Calu3 (cell line): ENCODE measurements at regions of chr2 and their contacts with region 1.

Region 1: DNA sequence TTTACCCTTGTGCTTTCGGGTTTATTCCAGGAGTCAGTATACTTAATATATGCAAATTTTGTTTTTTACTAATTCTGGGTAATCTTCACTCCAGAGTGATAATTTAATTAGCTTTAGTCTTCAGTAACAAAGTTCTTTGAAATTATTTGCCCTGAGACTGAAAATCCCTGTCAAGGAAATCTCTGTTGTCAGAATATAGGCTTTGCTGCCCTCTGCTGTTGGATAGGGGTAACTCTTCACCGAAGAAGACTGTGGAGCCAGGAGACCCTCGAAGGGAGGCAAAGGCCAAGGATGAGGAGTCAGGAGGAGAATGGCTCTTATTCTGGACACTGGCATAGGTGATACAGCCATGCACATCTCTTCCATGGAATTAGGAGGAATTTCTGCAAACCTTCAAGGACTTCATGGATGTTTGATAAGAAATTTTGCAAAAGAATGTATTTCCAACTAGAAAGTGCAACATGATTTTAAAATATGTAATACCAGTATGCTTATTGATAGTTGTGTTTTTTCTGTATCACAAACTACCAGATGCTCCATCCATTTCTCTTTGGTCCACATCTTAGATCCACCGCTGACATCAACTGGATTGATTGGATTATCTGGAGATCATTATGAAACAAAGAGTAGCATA is 182.3 kb downstream of the RDH14 start:
- DNase-seq: peak; percentile 48
- H3K4me3 Mint-ChIP-seq: no peak overlapping the region
- H3K27ac Mint-ChIP-seq: no peak overlapping the region
- H3K4me1 Mint-ChIP-seq: no peaks in the 10 kb centered on the region
- H3K27me3 Mint-ChIP-seq: no peaks in the 10 kb centered on the region
- CTCF ChIP-seq: peak; percentile 76

Region 2: GRCh38 chr2:17753803-17754663 is 624.1 kb before region 1 on chr2 and contains the starts of genes GEN1 and SMC6:
- CTCF ChIA-PET with region 1: no interaction called
- intact Hi-C with region 1: loop called (anchors 10 kb)
- DNase-seq: peak; percentile 89
- H3K4me3 Mint-ChIP-seq: peak within 1 kb of the TSS; percentile 86
- H3K27ac Mint-ChIP-seq: peak within 1 kb of the TSS; percentile 86
- H3K4me1 Mint-ChIP-seq: peaks cover 18% of the 10 kb centered on the region
- H3K27me3 Mint-ChIP-seq: no peaks in the 10 kb centered on the region
- CTCF ChIP-seq: no peak
- total RNA-seq, gene GEN1: 29.6 and 34.8 TPM in 2 replicates
- total RNA-seq, gene SMC6: 29.6 and 31.6 TPM in 2 replicates

Region 3: DNA sequence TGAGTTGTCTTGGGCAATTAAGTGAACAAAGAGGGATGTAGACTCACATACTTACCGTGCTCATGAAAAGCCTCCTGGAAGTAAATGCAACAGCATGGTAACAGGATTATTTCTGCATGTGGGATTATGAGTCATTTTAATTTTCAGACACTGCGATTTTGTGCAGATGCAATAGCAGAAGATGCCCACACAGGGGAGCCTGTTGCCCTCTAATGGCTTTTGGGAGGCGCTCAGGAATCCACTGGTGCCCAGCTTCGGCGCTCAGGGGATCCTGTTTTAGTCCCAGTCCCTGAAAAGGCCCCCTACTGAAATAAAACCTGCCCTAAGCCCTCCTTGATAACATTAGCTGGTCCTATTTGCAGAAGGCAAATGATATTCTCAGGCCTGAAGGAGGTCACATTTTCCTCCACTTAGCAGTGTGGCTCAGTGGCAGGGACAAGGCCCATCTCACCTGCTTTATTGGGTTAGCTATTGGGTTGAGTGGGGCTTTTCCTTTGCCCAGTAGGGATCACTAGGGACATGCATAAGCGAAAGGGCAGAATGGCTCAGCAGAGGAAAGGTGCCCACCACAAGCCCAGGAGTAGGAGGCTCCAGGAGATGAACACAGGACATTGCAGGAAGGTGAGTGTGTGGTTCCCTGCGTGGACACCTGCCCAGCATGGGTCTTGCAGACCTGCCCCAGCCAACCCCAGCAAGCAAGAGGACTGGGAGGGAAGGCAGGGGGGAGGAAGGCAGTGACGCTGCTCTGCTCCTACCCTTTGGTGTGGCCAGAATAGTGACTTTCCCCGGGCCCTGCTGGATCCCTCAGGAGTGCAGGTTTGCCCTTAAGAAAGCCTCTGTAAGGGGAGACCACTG is 526.2 kb before region 1 on chr2:
- CTCF ChIA-PET with region 1: no interaction called
- intact Hi-C with region 1: loop called (anchors 1 kb)
- DNase-seq: peak; percentile 67
- H3K4me3 Mint-ChIP-seq: no peak overlapping the region
- H3K27ac Mint-ChIP-seq: no peak overlapping the region
- H3K4me1 Mint-ChIP-seq: no peaks in the 10 kb centered on the region
- H3K27me3 Mint-ChIP-seq: peaks cover 43% of the 10 kb centered on the region
- CTCF ChIP-seq: peak; percentile 91

Region 4: GRCh38 chr2:18117592-18117991 is 260.5 kb before region 1 on chr2:
- CTCF ChIA-PET with region 1: no interaction called
- intact Hi-C with region 1: loop called (anchors 5 kb)
- DNase-seq: peak; percentile 50
- H3K4me3 Mint-ChIP-seq: no peak overlapping the region
- H3K27ac Mint-ChIP-seq: no peak overlapping the region
- H3K4me1 Mint-ChIP-seq: no peaks in the 10 kb centered on the region
- H3K27me3 Mint-ChIP-seq: peaks cover 12% of the 10 kb centered on the region
- CTCF ChIP-seq: peak; percentile 32

Region 5: GRCh38 chr2:18149645-18150246 is 228.4 kb before region 1 on chr2:
- CTCF ChIA-PET with region 1: no interaction called
- intact Hi-C with region 1: no loop called
- DNase-seq: no peak
- H3K4me3 Mint-ChIP-seq: no peak overlapping the region
- H3K27ac Mint-ChIP-seq: no peak overlapping the region
- H3K4me1 Mint-ChIP-seq: no peaks in the 10 kb centered on the region
- H3K27me3 Mint-ChIP-seq: peaks cover 24% of the 10 kb centered on the region
- CTCF ChIP-seq: peak; percentile 35

Region 6: DNA sequence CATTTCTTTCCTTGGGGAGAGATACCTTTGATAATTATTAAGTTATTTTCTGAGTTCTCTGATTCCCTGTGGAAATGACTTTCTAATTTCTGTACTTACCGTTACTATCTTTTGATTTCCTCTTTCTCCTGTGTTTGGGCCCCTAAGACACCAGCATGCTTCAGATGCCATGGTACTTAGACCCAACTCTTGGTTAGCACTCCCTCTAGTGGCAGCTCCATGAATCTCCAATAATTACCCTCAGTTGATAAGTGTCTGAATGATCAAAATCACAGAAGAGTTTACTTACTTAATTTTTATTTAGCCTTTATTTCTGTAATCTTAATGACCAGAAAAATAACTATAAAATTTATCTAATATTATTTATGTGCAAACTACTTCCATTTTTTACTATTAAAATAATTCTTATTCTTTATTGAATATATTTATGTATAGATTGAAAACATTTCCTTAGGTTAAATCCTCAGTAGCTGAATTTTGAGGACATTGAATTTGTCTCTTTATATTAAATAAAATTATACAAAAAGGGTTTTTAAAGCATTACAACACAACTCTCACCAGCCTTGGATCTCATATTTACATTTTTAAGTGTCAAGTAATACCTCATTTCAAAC is 199.3 kb before region 1 on chr2:
- CTCF ChIA-PET with region 1: no interaction called
- intact Hi-C with region 1: loop called (anchors 1 kb)
- DNase-seq: peak; percentile 60
- H3K4me3 Mint-ChIP-seq: no peak overlapping the region
- H3K27ac Mint-ChIP-seq: no peak overlapping the region
- H3K4me1 Mint-ChIP-seq: peaks cover 13% of the 10 kb centered on the region
- H3K27me3 Mint-ChIP-seq: no peaks in the 10 kb centered on the region
- CTCF ChIP-seq: peak; percentile 74

Region 7: DNA sequence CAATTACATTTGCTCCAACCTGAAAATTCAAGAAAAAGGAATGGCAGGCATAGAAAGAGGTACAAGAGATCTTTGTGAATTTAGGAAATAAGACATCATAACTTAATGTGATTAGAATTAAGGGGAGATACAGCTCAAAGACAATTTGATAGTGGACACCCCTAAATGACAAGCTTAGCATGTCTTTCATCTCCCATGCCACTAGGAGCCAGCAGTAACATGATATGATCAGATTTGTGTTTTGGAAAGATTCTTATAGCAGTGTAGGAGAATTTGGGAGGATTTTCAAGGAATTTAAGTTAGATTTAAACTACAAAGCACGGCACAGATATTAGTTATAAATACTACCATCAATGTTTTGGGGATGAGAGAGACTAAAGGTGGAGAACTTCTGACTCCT is 158.5 kb before region 1 on chr2:
- CTCF ChIA-PET with region 1: no interaction called
- intact Hi-C with region 1: loop called (anchors 1 kb)
- DNase-seq: no peak
- H3K4me3 Mint-ChIP-seq: no peak overlapping the region
- H3K27ac Mint-ChIP-seq: no peak overlapping the region
- H3K4me1 Mint-ChIP-seq: no peaks in the 10 kb centered on the region
- H3K27me3 Mint-ChIP-seq: no peaks in the 10 kb centered on the region
- CTCF ChIP-seq: no peak

Region 8: DNA sequence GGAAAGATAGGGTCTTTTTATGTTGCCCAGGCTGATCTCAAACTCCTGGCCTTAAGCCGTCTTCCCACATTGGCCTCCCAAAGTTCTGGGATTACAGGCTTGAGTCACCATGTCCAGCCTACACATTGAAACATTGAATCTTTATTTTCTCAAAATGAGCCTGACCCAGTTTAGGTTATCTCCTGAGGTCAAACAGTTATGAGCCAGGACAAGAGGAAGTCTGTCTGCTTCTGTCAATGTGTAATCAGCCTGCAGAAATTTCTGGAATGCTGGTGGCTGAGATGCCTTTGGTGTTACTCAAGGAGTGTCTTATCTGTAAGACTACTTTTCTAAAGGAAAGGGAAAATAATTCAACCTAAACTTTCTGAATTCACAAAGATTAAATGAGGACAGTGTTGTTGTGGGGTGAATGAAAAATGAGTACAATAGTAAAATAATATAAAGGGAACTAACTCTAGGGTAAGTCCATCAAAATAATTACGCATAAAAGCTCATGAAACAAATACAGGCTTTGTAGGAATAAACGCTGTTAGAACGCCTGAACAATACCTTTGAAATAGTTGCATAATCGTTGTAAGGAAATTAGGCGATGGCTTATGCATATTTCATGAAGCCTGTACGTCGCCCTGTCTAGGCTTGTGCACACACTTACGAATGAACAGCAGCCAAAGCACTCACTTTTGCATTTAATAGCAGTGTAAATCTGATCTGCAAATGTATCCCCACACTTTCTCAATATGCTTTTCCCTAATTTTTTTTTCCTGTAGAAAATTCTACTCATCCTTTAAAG is 78.5 kb before region 1 on chr2:
- CTCF ChIA-PET with region 1: no interaction called
- intact Hi-C with region 1: loop called (anchors 1 kb)
- DNase-seq: peak; percentile 74
- H3K4me3 Mint-ChIP-seq: peak overlapping the region; percentile 34
- H3K27ac Mint-ChIP-seq: peak overlapping the region; percentile 61
- H3K4me1 Mint-ChIP-seq: peaks cover 11% of the 10 kb centered on the region
- H3K27me3 Mint-ChIP-seq: no peaks in the 10 kb centered on the region
- CTCF ChIP-seq: no peak

Region 9: DNA sequence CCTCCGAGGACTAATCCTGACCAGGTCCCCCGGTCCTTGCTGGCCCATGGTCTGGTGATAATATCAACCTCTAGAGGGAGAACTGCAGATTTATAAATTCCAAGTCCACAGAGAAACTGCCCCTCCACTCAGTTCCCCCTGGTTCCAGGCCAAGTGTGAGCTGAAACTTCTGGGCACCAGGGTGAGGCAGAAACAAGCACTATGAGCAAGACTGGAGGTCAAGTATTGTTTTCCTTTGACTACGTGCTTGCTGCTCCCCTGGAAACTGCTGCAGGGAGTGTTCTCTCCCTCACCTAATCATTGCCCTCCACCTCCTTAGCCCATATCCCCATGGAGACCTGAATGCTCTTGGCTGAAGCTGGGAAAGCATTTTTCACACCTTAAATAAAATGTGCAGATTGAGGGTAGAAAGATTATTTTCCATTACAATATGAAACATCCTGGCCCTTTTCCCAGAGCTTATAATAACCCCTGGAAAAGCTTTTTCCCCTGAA is 47.1 kb after region 1 on chr2:
- CTCF ChIA-PET with region 1: no interaction called
- intact Hi-C with region 1: no loop called
- DNase-seq: no peak
- H3K4me3 Mint-ChIP-seq: no peak overlapping the region
- H3K27ac Mint-ChIP-seq: no peak overlapping the region
- H3K4me1 Mint-ChIP-seq: no peaks in the 10 kb centered on the region
- H3K27me3 Mint-ChIP-seq: peaks cover 27% of the 10 kb centered on the region
- CTCF ChIP-seq: no peak